ENCODE measurements at regions of chr12 and their contacts with region 1.

Region 1: DNA sequence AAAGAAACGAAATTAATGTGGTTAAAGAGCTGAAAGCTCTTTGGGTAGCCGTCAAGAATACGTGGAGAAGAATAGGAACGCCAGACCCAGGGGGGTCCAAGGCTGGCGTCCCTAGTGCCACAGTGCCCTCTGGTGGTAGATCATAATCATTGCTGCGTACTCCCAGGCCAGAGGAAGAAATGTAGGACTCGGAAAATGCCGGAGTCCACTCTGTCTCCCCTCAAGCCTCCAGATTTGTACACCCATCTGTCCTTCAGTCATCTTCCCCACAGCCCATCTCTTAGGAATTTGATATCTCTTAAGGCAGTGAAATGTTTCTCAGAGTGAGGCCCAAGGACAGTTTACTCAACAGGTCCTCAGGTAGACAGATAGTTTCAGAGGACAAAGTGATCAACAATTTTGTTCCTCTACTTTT is 25.4 kb upstream of the PLEKHG6 start:
- DNase-seq: peak; percentile 63
- ATAC-seq: peak; percentile 90
- H3K4me3 Mint-ChIP-seq: no peak overlapping the region
- H3K27ac Mint-ChIP-seq: no peak overlapping the region
- H3K4me1 Mint-ChIP-seq: no peaks in the 10 kb centered on the region
- H3K27me3 Mint-ChIP-seq: peaks cover 9% of the 10 kb centered on the region
- CTCF ChIP-seq: peak; percentile 98

Region 2: GRCh38 chr12:5996459-5996858 is 288.6 kb before region 1 on chr12:
- CTCF ChIA-PET with region 1: interaction called, 4 read pairs
- POLR2A ChIA-PET with region 1: no interaction called
- intact Hi-C with region 1: loop called (anchors 10 kb)
- DNase-seq: no peak
- ATAC-seq: no peak
- H3K4me3 Mint-ChIP-seq: no peak overlapping the region
- H3K27ac Mint-ChIP-seq: no peak overlapping the region
- H3K4me1 Mint-ChIP-seq: no peaks in the 10 kb centered on the region
- H3K27me3 Mint-ChIP-seq: peaks cover 18% of the 10 kb centered on the region
- CTCF ChIP-seq: no peak

Region 3: GRCh38 chr12:6062757-6063735 is 222.0 kb before region 1 on chr12:
- CTCF ChIA-PET with region 1: interaction called, 6 read pairs
- POLR2A ChIA-PET with region 1: no interaction called
- intact Hi-C with region 1: loop called (anchors 2 kb)
- DNase-seq: peak; percentile 73
- ATAC-seq: peak; percentile 97
- H3K4me3 Mint-ChIP-seq: no peak overlapping the region
- H3K27ac Mint-ChIP-seq: no peak overlapping the region
- H3K4me1 Mint-ChIP-seq: peaks cover 2% of the 10 kb centered on the region
- H3K27me3 Mint-ChIP-seq: no peaks in the 10 kb centered on the region
- CTCF ChIP-seq: peak; percentile 97

Region 4: DNA sequence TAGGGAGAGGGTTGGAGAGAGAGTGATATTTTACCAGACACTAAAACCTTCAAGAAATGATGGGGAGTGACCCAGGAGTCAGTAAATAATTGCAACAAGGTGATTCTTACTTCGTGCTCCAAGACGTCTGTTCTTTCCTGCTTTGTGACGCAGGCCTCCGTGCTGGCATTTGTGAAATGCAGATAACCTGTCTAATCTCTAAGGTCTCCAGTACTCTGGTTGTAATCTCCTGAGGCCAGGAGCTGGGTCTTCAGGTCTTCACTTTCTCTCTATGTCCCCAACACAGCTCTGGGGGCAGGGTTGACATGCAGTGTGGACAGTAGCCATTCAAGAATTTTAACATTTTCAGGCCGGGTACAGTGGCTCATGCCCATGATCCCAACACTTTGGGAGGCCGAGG is 31.8 kb before region 1 on chr12:
- CTCF ChIA-PET with region 1: no interaction called
- POLR2A ChIA-PET with region 1: no interaction called
- intact Hi-C with region 1: no loop called
- DNase-seq: no peak
- ATAC-seq: no peak
- H3K4me3 Mint-ChIP-seq: no peak overlapping the region
- H3K27ac Mint-ChIP-seq: no peak overlapping the region
- H3K4me1 Mint-ChIP-seq: no peaks in the 10 kb centered on the region
- H3K27me3 Mint-ChIP-seq: peaks cover 2% of the 10 kb centered on the region
- CTCF ChIP-seq: no peak

Region 5: DNA sequence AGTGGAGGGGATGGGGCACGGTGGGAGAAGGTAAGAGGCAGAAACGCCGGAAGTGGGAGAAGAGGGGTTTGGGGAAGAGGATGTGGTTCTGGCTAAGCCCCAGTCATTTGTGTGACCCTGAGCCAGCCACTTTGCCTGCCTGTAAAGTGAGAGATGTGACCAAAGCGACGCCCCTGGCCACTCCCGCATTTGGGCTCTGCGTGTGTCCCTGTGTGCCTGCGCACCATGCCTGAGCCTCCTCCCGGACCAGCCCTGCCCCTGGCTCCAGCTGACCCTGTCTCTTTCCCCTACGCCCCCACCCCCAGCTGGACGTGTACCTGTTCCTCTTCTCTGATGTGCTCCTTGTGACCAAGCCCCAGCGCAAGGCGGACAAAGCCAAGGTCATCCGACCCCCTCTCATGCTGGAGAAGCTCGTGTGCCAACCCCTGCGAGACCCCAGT is 33.4 kb after region 1 on chr12:
- CTCF ChIA-PET with region 1: interaction called, 12 read pairs
- POLR2A ChIA-PET with region 1: no interaction called
- intact Hi-C with region 1: no loop called
- DNase-seq: no peak
- ATAC-seq: peak; percentile 7
- H3K4me3 Mint-ChIP-seq: no peak overlapping the region
- H3K27ac Mint-ChIP-seq: peak overlapping the region; percentile 44
- H3K4me1 Mint-ChIP-seq: peaks cover 28% of the 10 kb centered on the region
- H3K27me3 Mint-ChIP-seq: no peaks in the 10 kb centered on the region
- CTCF ChIP-seq: no peak

Region 6: GRCh38 chr12:6335451-6336078 is 50.5 kb after region 1 on chr12:
- CTCF ChIA-PET with region 1: no interaction called
- POLR2A ChIA-PET with region 1: no interaction called
- intact Hi-C with region 1: no loop called
- DNase-seq: peak; percentile 96
- ATAC-seq: peak; percentile 71
- H3K4me3 Mint-ChIP-seq: no peak overlapping the region
- H3K27ac Mint-ChIP-seq: no peak overlapping the region
- H3K4me1 Mint-ChIP-seq: peaks cover 52% of the 10 kb centered on the region
- H3K27me3 Mint-ChIP-seq: no peaks in the 10 kb centered on the region
- CTCF ChIP-seq: peak; percentile 48

Region 7: DNA sequence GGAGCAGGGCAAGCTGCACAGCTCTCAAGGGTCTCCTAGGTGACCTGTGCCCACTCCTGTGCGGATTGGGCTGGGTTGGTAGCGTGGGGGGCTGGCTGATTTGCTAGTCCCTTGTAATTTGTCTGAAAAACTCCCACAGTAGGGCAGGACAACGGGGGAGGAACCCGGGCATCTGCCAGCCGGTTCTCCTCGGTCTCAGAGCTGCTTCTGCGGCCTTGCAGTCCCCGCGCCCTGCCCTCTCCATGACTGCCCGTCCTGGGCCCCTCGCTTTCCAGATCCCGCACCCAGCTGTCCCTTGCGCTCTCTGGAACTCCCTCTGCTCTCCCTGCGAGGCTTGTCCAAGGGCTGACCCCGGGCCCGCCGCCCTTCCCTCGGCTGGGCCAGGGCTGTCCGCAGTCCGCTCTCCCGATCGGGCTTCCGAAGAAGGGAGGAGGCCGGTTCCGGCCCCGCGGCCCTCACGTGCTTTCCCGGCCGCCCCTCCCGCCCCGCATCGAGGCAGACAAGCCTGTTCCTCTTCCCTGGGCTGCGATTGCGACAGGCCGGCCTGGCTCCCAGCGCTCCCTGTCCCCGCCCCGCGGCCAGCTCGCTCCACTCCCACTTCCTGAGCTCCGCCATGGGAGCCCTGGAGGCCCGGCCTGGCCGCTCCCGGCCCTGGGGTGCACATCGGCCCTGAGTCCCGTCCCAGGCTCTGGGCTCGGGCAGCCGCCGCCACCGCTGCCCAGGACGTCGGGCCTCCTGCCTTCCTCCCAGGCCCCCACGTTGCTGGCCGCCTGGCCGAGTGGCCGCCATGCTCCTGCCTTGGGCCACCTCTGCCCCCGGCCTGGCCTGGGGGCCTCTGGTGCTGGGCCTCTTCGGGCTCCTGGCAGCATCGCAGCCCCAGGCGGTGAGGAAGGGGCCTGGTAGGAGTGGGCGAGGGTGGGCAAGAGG is 98.8 kb after region 1 on chr12 and contains the start of gene LTBR:
- CTCF ChIA-PET with region 1: no interaction called
- POLR2A ChIA-PET with region 1: no interaction called
- intact Hi-C with region 1: no loop called
- DNase-seq: no peak
- ATAC-seq: peak; percentile 47
- H3K4me3 Mint-ChIP-seq: no peak within 1 kb of the TSS
- H3K27ac Mint-ChIP-seq: no peak within 1 kb of the TSS
- H3K4me1 Mint-ChIP-seq: peaks cover 3% of the 10 kb centered on the region
- H3K27me3 Mint-ChIP-seq: peaks cover 14% of the 10 kb centered on the region
- CTCF ChIP-seq: no peak
- total RNA-seq, gene LTBR: 1.5 to 1.6 TPM